Right ventricle myocardium superior (tissue), 1 donor: ENCODE measurements at regions of chr16 and their contacts with region 1.

Region 1: DNA sequence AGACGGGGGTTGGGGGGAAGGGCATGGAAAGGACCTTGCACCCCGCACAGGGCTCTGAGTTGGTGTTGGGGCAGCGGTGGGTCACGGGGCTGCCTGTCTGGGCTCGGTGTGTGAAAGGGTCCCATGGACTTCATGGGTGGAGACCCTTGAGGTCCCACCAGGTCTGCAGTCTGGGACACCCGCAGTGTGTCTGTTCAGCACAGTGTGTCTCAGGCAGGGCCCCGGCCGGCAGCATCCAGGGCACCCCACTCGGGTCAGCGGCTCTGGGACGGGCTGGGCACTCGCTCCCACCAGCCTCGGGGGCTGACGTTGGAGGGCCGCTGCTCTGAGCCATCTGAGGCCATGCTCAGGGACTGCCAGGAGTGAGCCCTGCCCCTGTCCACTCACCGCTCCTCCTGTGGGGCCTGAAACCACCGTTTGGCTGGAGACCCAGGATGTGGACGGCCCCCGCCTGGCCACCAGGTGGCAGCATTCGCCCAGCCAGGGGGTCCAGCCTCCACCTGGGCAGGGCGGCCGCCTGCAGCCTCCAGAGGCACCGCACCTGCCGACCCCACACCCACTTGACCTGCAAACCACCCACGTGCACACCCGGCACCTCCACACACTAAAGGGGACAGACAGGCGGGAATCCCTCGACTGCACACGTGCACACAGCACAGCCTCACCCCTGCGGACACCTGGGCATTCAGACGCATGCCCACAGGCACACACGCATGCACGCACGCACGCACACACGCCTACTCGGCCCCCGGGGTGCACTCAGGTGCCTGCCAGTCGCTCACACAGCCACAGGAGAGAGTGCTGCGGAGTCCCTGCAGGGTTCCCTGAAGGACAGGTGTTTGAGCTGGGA is 10.1 kb upstream of the ZFPM1 start:
- DNase-seq: peak; percentile 82
- ATAC-seq: peak; percentile 93

Region 2: DNA sequence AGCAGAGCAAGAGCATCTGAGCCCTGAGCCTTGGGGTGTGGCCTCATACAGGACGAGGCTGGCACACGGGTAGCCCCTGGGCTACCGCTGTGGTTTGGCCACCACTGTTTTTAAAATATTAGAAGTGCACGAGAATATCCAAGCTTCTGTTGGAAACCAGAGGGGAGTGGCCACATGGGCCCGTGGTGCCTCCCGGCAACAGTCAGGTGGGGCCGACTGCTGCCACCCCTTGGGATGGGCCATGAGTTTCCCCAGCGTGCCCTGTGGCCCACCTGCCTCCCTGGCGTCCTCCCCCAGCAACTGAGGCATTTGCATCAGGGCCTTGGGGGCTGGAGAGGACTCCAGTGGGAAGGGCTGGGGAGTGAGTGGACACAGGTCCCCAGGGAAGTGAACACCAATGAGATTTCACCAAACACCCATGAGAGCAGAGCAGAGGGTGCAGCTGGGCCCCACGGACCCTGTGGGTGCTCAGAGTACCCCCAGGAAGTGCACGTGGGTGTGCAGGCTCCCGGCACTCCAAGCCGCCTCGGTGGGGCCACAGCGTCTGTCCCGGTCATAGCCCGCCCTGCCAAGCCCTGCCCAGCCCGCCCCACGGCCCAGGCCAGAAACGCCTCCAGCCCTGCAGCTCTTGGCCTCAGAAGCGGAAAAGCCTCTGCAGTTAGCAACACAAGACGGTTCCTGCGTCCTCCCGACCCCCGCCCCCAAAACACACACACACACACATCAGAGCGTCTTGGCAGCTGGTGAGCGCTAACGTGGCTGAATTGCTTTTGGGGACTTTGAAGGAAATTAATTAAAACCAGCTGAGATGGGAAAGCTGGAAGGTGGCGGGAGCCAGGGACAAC is 37.5 kb before region 1 on chr16:
- intact Hi-C with region 1: no loop called
- DNase-seq: peak; percentile 68
- ATAC-seq: peak; percentile 66

Region 3: GRCh38 chr16:88516601-88517061 is 73.7 kb after region 1 on chr16:
- intact Hi-C with region 1: no loop called
- DNase-seq: no peak
- ATAC-seq: no peak

Region 4: GRCh38 chr16:88527186-88527936 is 84.4 kb after region 1 on chr16:
- intact Hi-C with region 1: loop called (anchors 2 kb)
- DNase-seq: peak; percentile 81
- ATAC-seq: peak; percentile 73

Region 5: GRCh38 chr16:88561485-88562369 is 118.8 kb after region 1 on chr16:
- intact Hi-C with region 1: loop called (anchors 2 kb)
- DNase-seq: peak; percentile 53
- ATAC-seq: peak; percentile 61